ENCODE measurements at regions of chr9 and their contacts with region 1.

Region 1: GRCh38 chr9:83980395-83981125 is at the start of gene RMI1:
- DNase-seq: peak; percentile 90
- ATAC-seq: peak; percentile 77
- H3K4me3 ChIP-seq: peak within 1 kb of the TSS; percentile 72
- H3K27ac ChIP-seq: peak within 1 kb of the TSS; percentile 94
- H3K4me1 ChIP-seq: peaks cover 2% of the 10 kb centered on the region; the same call in 1 of the 2 replicates
- H3K27me3 ChIP-seq: no peaks in the 10 kb centered on the region
- CTCF ChIP-seq: 0 out of 6 replicates have a peak, but pooled peaks of 1 of the 3 experiments have one; percentile 7
- EP300 ChIP-seq: peak in 1 of 2 experiments; percentile 7; a peak in 1 of 4 replicates
- POLR2A ChIP-seq: peak; percentile 93
- RAD21 ChIP-seq: no peak
- polyA plus RNA-seq, gene RMI1: 12.0 to 12.8 TPM

Region 2: DNA sequence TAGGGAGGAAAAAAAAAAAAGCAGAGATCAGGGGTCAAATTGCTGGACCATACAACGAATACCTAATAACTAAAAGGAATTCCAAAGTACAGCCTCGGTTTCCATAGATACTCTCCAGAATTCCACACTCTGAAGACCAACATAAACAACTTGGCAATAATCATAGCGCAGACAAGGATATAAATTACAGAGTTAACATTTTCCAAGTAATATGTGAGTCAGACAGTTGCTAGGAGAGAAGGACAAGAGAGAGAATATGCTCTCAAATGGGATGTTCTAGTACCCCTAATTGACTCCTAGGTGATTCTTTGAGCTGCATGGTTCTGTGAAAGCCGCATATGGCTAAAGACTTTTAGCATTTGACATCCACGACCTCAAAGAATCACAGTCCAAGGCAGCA is 607.6 kb before region 1 on chr9:
- CTCF ChIA-PET with region 1: no interaction called
- POLR2A ChIA-PET with region 1: no interaction called
- RAD21 ChIA-PET with region 1: no interaction called
- SMC1A ChIA-PET with region 1: no interaction called
- in situ Hi-C with region 1: no loop called
- intact Hi-C with region 1: no loop called
- DNase-seq: no peak
- ATAC-seq: no peak
- H3K4me3 ChIP-seq: no peak overlapping the region
- H3K27ac ChIP-seq: no peak overlapping the region
- H3K4me1 ChIP-seq: no peaks in the 10 kb centered on the region
- H3K27me3 ChIP-seq: no peaks in the 10 kb centered on the region
- CTCF ChIP-seq: no peak
- EP300 ChIP-seq: no peak
- POLR2A ChIP-seq: no peak
- RAD21 ChIP-seq: no peak

Region 3: DNA sequence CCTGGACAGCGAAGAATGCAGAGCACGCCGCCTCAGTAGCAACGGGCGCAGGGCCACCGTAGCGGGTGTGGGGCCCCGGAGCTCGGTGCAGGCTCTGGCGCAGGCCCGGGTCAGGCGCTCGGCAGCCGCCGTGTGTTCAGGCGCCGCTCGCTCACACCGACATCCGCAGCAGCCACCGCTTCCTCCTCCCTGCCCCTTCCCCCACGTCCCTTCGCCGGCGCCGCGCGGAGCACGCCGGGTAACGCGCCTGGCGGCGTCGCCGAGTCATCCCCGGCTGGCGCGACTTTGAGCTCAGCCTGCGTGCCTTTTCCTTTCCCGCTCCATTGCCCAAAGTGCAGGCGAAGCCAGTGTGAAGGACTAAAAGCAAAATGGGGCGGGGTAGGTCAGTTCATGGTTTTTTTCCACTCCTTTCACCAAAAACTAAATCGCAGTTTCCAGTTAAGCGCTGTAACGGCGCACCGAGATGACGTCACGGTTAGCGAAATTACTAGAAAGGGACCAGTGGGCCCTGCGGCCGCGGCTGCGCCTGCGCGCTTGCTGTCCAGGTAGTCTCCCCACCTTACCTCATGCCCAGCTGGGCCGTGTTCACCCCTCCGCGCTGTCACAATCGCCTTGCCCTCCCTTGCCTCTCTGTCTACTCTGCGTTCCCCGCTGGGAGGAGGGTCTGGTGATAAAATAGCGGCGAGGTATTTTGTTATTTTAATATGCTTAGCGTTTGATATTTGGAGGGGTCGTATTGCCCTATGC is 272.6 kb before region 1 on chr9 and contains the start of gene UBQLN1:
- CTCF ChIA-PET with region 1: no interaction called
- POLR2A ChIA-PET with region 1: interaction called, 5 read pairs
- RAD21 ChIA-PET with region 1: interaction called, 3 read pairs
- SMC1A ChIA-PET with region 1: no interaction called
- in situ Hi-C with region 1: no loop called
- intact Hi-C with region 1: loop called (anchors 5 kb)
- DNase-seq: peak; percentile 72
- ATAC-seq: peak; percentile 86
- H3K4me3 ChIP-seq: peak within 1 kb of the TSS; percentile 90
- H3K27ac ChIP-seq: peak within 1 kb of the TSS; percentile 96
- H3K4me1 ChIP-seq: no peaks in the 10 kb centered on the region
- H3K27me3 ChIP-seq: no peaks in the 10 kb centered on the region
- CTCF ChIP-seq: no peak
- EP300 ChIP-seq: peak; percentile 20 to 53; a peak in 1 of 4 replicates
- POLR2A ChIP-seq: peak; percentile 96
- RAD21 ChIP-seq: no peak
- polyA plus RNA-seq, gene UBQLN1: 12.4 to 15.0 TPM

Region 4: GRCh38 chr9:83744212-83744611 is 236.3 kb before region 1 on chr9:
- CTCF ChIA-PET with region 1: no interaction called
- POLR2A ChIA-PET with region 1: no interaction called
- RAD21 ChIA-PET with region 1: no interaction called
- SMC1A ChIA-PET with region 1: no interaction called
- in situ Hi-C with region 1: no loop called
- intact Hi-C with region 1: no loop called
- DNase-seq: no peak
- ATAC-seq: no peak
- H3K4me3 ChIP-seq: no peak overlapping the region
- H3K27ac ChIP-seq: no peak overlapping the region
- H3K4me1 ChIP-seq: no peaks in the 10 kb centered on the region
- H3K27me3 ChIP-seq: no peaks in the 10 kb centered on the region
- CTCF ChIP-seq: no peak
- EP300 ChIP-seq: no peak
- POLR2A ChIP-seq: no peak
- RAD21 ChIP-seq: no peak

Region 5: GRCh38 chr9:83920927-83921707 is 59.4 kb before region 1 on chr9 and contains the start of gene KIF27:
- CTCF ChIA-PET with region 1: no interaction called
- POLR2A ChIA-PET with region 1: interaction called, 7 read pairs
- RAD21 ChIA-PET with region 1: interaction called, 4 read pairs
- SMC1A ChIA-PET with region 1: interaction called, 6 read pairs
- in situ Hi-C with region 1: no loop called
- intact Hi-C with region 1: loop called (anchors 1 kb)
- DNase-seq: peak; percentile 80
- ATAC-seq: peak; percentile 95
- H3K4me3 ChIP-seq: peak within 1 kb of the TSS; percentile 79
- H3K27ac ChIP-seq: peak within 1 kb of the TSS; percentile 79
- H3K4me1 ChIP-seq: peaks cover 9% of the 10 kb centered on the region
- H3K27me3 ChIP-seq: no peaks in the 10 kb centered on the region
- CTCF ChIP-seq: peak in 2 of 3 experiments; percentile 11 to 19; a peak in 3 of 6 replicates
- EP300 ChIP-seq: no peak
- POLR2A ChIP-seq: peak; percentile 81
- RAD21 ChIP-seq: no peak
- polyA plus RNA-seq, gene KIF27: 0.64 to 0.92 TPM

Region 6: DNA sequence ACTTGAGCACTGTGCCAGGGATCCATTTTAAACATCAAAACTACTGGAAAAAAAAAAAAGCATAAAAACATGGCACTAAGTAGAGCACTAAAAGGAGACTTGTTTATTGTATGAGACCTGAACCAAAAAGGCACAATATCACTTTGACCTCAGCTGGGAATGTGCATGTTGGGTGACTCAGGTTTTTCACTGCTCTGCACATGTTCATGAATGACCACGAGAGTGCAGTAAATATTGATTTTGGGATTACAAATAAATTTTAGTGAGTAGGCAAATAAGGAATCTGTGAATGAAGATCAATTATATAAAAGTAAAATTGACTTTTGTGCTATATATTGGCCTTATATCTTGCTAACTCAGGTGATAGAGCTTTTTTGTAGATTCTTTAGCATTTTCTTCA is 11.9 kb after region 1 on chr9:
- CTCF ChIA-PET with region 1: no interaction called
- POLR2A ChIA-PET with region 1: interaction called, 11 read pairs
- RAD21 ChIA-PET with region 1: no interaction called
- SMC1A ChIA-PET with region 1: interaction called, 3 read pairs
- in situ Hi-C with region 1: no loop called
- intact Hi-C with region 1: no loop called
- DNase-seq: no peak
- ATAC-seq: no peak
- H3K4me3 ChIP-seq: no peak overlapping the region
- H3K27ac ChIP-seq: no peak overlapping the region
- H3K4me1 ChIP-seq: no peaks in the 10 kb centered on the region
- H3K27me3 ChIP-seq: no peaks in the 10 kb centered on the region
- CTCF ChIP-seq: no peak
- EP300 ChIP-seq: no peak
- POLR2A ChIP-seq: no peak
- RAD21 ChIP-seq: no peak

Region 7: DNA sequence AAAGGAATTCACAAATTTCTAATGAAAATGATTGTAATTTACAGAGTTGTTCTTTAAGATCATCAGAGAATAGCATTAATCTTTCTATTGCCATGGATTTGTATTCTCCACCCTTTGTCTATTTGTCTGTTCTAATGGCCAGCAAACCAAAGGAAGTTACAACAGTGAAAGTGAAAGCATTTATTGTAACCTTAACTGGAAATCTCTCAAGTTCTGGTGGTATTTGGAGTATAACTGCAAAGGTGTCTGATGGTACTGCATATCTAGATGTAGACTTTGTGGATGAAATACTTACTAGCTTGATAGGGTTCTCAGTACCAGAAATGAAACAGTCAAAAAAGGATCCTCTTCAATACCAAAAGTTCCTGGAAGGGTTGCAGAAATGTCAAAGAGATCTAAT is 21.8 kb after region 1 on chr9:
- CTCF ChIA-PET with region 1: interaction called, 3 read pairs
- POLR2A ChIA-PET with region 1: interaction called, 12 read pairs
- RAD21 ChIA-PET with region 1: interaction called, 5 read pairs
- SMC1A ChIA-PET with region 1: no interaction called
- in situ Hi-C with region 1: no loop called
- intact Hi-C with region 1: no loop called
- DNase-seq: no peak
- ATAC-seq: peak; percentile 96
- H3K4me3 ChIP-seq: no peak overlapping the region
- H3K27ac ChIP-seq: no peak overlapping the region
- H3K4me1 ChIP-seq: peaks cover 3% of the 10 kb centered on the region; the same call in 1 of the 2 replicates
- H3K27me3 ChIP-seq: no peaks in the 10 kb centered on the region
- CTCF ChIP-seq: no peak
- EP300 ChIP-seq: no peak
- POLR2A ChIP-seq: no peak
- RAD21 ChIP-seq: no peak

Region 8: DNA sequence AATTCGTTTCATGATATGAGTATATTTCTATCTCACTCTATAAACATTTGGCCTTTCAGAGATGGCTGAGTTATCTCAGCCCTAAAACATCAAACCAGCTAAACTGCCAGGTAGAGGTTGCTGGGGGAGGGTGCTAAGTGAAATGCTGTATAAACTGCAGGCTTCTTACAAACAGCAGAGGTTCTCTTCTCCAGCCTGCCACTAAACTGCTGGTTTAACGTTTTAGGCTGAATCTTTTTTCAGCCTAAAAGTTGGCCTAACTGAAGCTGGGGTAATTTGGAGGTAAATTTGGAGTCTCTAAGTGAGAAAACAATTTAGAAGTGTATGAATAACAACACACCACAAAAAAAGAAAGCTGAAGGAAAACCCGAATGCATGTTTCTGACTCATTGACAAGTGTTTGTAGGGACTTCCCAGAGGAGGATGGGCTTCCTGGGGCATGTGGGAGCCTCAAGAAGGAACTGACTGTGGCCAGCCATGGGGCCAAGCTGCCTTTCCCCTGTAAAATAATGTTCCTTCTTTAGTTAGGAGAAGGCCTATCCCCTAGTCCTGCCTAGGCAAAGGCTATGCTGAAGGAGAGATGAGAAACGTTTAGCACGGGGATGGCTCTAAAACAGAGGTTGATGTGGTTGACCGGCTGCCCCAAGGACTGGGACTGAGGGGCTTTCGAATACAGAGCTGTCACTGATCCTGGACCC is 315.7 kb after region 1 on chr9:
- CTCF ChIA-PET with region 1: interaction called, 5 read pairs
- POLR2A ChIA-PET with region 1: interaction called, 4 read pairs
- RAD21 ChIA-PET with region 1: interaction called, 8 read pairs
- SMC1A ChIA-PET with region 1: no interaction called
- in situ Hi-C with region 1: no loop called
- intact Hi-C with region 1: loop called (anchors 5 kb)
- DNase-seq: peak; percentile 66
- ATAC-seq: peak; percentile 80
- H3K4me3 ChIP-seq: no peak overlapping the region
- H3K27ac ChIP-seq: peak overlapping the region; percentile 86
- H3K4me1 ChIP-seq: peaks cover 46% of the 10 kb centered on the region
- H3K27me3 ChIP-seq: no peaks in the 10 kb centered on the region
- CTCF ChIP-seq: no peak
- EP300 ChIP-seq: peak; percentile 63 to 70; a peak in 3 of 4 replicates
- POLR2A ChIP-seq: 0 out of 2 replicates have a peak, but pooled peaks have one; percentile 18
- RAD21 ChIP-seq: no peak

Region 9: DNA sequence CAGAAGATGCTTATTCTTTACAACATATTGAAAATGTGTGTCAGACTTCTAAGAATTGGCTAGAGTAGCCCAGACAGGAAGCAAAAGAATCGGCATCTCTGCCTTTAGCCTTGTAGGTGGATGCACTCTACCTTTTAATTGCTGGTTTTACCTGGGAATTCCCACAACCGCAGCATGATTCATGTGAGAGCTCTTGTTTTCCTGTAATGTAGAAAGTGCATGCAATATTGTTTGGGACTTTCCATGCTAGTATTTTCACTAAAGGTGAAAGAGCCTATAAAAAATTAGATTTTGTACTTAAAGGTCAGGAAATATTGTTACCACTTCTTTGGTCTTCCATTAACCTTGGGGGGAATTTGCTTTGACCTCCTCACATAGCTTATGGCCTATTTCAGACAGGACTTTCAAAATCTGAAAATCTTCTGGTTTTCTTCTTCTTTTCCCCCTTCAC is 778.8 kb after region 1 on chr9:
- CTCF ChIA-PET with region 1: no interaction called
- POLR2A ChIA-PET with region 1: no interaction called
- RAD21 ChIA-PET with region 1: no interaction called
- SMC1A ChIA-PET with region 1: no interaction called
- in situ Hi-C with region 1: loop called (anchors 25 kb)
- intact Hi-C with region 1: no loop called
- DNase-seq: peak; percentile 81
- ATAC-seq: peak; percentile 78
- H3K4me3 ChIP-seq: peak overlapping the region; percentile 4; the same call in 1 of the 2 replicates
- H3K27ac ChIP-seq: peak overlapping the region; percentile 82
- H3K4me1 ChIP-seq: peaks cover 24% of the 10 kb centered on the region
- H3K27me3 ChIP-seq: no peaks in the 10 kb centered on the region
- CTCF ChIP-seq: no peak
- EP300 ChIP-seq: peak; percentile 96
- POLR2A ChIP-seq: no peak
- RAD21 ChIP-seq: no peak